ENCODE measurements at regions of chr3 and their contacts with region 1.

Region 1: DNA sequence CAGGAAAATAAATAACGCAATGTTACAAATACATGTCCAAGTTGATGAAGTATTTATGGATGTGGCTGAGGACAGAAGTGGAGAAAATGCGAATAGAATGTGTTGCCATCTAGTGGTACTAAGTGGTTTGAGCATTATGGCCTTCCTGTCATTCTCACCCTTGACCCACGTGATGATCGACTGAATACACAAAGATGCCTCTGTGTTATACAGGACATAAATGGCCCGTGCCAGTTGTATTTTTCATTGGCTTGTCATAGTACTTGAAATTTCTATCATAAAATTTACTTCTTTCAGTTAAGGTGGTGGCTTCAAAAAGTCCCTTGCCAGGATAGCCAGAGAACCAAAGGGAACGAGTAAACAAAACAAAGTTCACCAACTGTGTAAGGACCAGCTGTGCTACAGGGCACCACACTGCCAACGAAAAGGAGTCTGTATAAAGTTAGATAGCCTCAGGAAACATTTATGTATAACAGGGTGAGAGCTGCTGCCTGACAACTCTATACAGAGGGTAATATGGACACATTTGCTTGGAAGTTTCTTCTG is 103.7 kb downstream of the MYH15 start:
- DNase-seq: peak; percentile 35
- ATAC-seq: peak; percentile 96
- H3K4me3 Mint-ChIP-seq: no peak overlapping the region
- H3K27ac Mint-ChIP-seq: no peak overlapping the region
- H3K4me1 Mint-ChIP-seq: peaks cover 10% of the 10 kb centered on the region
- H3K27me3 Mint-ChIP-seq: no peaks in the 10 kb centered on the region

Region 2: GRCh38 chr3:107690522-107691138 is 716.1 kb before region 1 on chr3:
- CTCF ChIA-PET with region 1: no interaction called
- POLR2A ChIA-PET with region 1: no interaction called
- intact Hi-C with region 1: loop called in 1 of 2 experiments (anchors 5 kb)
- DNase-seq: no peak
- ATAC-seq: peak; percentile 57
- H3K4me3 Mint-ChIP-seq: no peak overlapping the region
- H3K27ac Mint-ChIP-seq: no peak overlapping the region
- H3K4me1 Mint-ChIP-seq: peaks cover 13% of the 10 kb centered on the region
- H3K27me3 Mint-ChIP-seq: no peaks in the 10 kb centered on the region

Region 3: DNA sequence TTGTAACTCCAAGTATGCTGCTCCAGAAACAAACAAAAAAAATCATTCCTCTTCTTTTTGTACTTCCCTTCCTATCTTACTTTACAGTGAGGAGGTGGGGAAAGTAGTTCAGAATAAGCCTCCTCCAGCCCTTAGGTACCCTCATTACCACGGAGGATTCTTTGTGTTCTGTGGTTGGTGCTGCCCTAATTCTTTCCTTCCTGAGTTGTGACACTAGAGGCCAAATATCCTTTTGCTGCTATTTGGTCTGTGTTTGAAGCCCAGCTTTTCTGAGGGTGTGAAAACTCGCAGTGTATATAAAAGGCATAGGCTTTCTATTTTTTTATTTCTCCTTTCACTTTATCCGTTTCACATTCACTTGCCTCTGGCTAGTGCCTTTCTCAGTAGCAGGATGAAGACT is 12.2 kb before region 1 on chr3:
- CTCF ChIA-PET with region 1: interaction called, 12 read pairs
- POLR2A ChIA-PET with region 1: no interaction called
- intact Hi-C with region 1: no loop called
- DNase-seq: no peak
- ATAC-seq: no peak
- H3K4me3 Mint-ChIP-seq: no peak overlapping the region
- H3K27ac Mint-ChIP-seq: no peak overlapping the region
- H3K4me1 Mint-ChIP-seq: no peaks in the 10 kb centered on the region
- H3K27me3 Mint-ChIP-seq: peaks cover 16% of the 10 kb centered on the region

Region 4: DNA sequence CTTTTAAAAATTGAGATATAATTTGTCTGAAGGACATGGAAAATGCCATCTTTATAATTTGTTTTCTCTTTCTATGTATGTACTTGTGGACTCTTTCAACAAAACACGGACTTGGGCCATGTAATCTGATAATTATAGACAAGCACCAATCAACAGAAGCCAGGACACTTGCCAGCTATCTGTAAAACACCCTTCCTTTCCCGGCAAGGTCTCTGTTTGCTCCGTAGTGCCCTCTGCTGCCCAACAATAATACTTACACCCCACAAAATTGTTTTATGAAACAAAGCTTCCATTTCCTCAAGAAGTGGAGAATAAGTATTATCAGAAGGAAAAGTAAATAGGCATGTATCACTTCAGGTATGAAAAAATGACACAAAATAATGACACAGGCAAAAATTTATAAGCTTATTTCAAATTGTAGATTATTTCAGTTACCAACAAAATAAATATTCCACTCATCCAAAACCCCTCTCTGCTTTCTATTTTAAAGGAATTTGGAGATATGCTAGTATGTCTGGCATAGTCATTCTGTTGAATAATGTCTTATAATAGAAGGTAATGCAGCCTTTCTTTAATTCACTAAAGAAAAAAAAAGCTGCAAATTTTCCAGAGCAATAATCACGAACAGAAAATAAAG is 70.9 kb after region 1 on chr3:
- CTCF ChIA-PET with region 1: interaction called, 6 read pairs
- POLR2A ChIA-PET with region 1: interaction called, 7 read pairs
- intact Hi-C with region 1: loop called in 1 of 2 experiments (anchors 5 kb)
- DNase-seq: peak; percentile 78
- ATAC-seq: peak; percentile 79
- H3K4me3 Mint-ChIP-seq: no peak overlapping the region
- H3K27ac Mint-ChIP-seq: no peak overlapping the region
- H3K4me1 Mint-ChIP-seq: no peaks in the 10 kb centered on the region
- H3K27me3 Mint-ChIP-seq: peaks cover 2% of the 10 kb centered on the region

Region 5: DNA sequence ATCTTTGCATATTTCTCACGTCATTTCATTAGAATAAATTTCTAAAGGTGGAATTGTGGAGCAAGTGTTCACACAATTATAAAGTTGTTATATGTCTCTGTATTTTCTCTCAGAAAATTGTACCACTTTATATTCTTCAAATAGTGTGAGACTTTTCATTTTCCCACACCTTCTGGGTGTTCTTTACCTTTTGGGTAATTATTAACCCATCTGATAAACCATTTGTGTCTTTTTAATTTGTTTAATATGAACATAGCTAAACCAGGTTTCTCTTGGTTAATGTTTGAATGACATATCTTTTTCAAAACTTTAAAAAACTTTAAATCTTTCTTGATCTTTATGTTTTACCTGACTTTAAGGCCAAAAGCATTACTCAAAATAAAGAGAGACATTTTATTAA is 223.2 kb after region 1 on chr3:
- CTCF ChIA-PET with region 1: no interaction called
- POLR2A ChIA-PET with region 1: no interaction called
- intact Hi-C with region 1: no loop called
- DNase-seq: no peak
- ATAC-seq: no peak
- H3K4me3 Mint-ChIP-seq: no peak overlapping the region
- H3K27ac Mint-ChIP-seq: no peak overlapping the region
- H3K4me1 Mint-ChIP-seq: no peaks in the 10 kb centered on the region
- H3K27me3 Mint-ChIP-seq: no peaks in the 10 kb centered on the region